GM18951 (cell line): ENCODE measurements at regions of chr2 and their contacts with region 1.

Region 1: DNA sequence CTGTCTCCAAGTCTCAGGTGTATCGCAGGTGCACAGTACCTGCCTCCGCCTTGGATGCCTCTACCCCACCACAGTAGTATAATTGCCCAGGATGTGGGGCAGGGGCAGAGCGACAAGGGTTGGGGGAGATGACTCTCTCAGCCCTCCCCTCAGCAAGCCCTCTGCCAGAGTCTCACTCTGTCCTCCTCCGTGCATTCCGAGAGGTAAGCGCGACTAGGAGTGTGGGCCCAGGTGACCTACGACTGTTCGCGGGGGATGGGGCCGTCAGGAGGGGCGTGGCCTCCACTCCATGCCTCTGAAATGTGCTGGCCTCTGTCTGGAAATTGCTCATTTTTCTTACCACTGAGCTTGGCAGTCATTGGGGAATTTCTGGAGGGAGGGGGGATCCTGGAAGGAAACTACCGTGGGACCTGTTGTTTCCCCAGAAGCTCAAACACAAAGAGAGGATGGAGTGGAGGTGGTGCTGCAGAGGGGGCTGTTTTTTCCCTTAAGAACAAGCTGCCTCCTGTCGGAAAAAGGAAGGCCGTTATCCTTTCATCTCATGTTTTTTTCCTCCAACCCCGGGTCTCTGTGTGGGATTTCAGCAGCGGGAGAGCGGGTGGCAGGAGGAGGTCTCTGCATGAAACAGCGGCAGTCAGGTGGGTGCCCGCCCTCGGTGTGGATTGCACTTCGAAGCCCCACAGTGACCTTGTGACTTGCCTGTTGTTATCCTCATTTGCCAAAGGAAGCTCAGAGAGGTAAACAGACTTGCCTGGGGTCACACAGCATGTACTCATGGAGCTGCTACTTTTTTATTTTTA is 13.0 kb upstream of the RALB start:
- POLR2A ChIP-seq: no peak

Region 2: DNA sequence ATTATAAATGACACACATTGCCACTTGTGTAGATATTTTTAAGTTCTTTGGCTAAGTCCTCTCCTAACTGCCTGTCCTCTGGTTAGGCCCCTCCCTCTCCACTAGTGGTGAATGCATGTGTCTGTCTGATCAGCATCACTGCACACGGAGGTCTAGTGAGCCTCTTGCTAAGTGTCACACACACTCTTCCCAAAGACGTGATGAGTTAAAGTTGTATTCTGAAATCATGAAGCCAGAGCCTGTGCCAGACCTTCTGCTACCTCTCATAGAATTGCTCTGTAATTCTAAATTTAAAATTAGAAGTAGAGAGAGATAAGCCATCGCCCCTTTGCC is 54.3 kb after region 1 on chr2:
- in situ Hi-C with region 1: loop called (anchors 5 kb)
- POLR2A ChIP-seq: no peak